ENCODE measurements at regions of chr7 and their contacts with region 1.

Region 1: DNA sequence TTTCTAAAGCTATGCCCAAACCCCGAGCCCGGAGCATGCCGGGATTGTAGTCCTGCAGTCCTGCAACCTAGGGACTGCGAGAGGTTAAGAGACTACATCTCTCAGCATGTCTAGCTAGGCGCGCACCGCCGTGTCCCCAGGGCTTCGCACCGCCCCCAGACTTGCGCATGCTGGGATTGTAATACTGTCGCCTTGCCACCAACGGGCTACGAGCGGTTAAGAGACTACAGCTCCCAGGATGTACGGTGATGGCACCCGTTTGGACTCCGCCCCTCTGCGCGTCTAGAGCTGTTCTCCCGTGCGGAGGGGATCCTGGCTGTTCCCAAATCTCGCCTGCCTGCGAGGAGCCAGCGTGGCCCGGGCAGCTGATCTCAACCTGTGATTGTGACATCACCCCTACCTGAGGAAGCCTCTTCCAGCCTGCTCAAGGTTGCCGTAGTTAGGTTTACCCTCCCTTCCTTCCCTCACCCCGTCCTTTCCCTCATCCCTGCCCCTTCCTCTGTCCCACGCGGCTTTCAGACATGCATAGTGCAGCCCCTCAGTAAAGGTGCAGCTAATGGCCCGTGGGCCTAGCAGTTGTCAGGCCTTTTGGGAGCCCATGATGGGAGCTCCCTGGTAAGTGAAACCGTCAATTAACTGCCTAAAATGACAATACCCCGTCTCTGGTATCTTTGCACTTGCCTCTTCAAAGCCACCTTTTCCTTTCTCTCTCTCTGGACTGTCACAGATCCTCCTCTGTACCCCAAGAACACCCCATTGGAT is 6.3 kb upstream of the ZNF736 start:
- DNase-seq: peak; percentile 96
- H3K4me3 ChIP-seq: peak overlapping the region; percentile 51 to 59 (median 58)
- H3K27ac ChIP-seq: peak overlapping the region; percentile 85 to 88 (median 86)
- H3K4me1 ChIP-seq: peaks cover 0 to 15% (median 9%) of the 10 kb centered on the region in 4 donors
- H3K27me3 ChIP-seq: no peaks in the 10 kb centered on the region
- CTCF ChIP-seq: peak in 2 of 4 experiments; percentile 13 to 22
- EP300 ChIP-seq: no peak
- POLR2A ChIP-seq: peak in 1 of 2 donors; percentile 15

Region 2: GRCh38 chr7:64192148-64192704 is 115.2 kb before region 1 on chr7:
- intact Hi-C with region 1: no loop called
- DNase-seq: no peak
- H3K4me3 ChIP-seq: no peak overlapping the region
- H3K27ac ChIP-seq: no peak overlapping the region
- H3K4me1 ChIP-seq: no peaks in the 10 kb centered on the region
- H3K27me3 ChIP-seq: no peaks in the 10 kb centered on the region
- CTCF ChIP-seq: no peak
- EP300 ChIP-seq: no peak
- POLR2A ChIP-seq: no peak

Region 3: DNA sequence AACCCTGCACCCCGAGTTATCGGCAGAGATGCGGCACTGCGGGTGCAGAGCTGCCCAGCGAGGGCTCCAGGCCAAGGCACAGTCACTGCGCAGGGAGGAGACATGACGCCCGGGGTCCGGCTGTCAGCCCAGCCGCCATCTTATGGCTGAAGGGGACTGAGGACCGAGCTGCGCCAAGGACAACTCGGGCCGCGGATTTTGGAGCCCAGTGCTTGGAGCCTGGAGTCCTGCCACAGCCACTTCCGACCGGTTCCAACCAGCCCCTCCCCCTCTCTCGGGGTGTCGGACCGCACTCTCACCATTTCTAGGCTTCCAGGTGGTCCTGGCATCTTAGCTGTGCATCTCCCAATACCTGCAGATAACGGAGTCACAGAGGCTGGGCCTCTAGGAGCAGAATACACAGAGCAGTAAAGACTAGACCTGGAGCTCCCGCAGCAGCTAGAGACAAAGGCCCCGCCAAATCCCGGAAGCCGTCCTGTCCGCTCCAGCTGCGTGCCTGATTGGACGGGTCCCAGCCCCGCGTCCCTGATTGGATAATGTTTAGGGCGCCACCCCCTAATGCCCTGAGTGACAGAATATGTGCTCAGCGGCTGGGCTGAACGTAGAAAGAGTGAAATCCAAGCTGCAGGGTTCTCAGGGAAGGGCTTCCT is 255.3 kb after region 1 on chr7 and contains the start of gene ZNF680:
- intact Hi-C with region 1: loop called (anchors 5 kb)
- DNase-seq: peak; percentile 98
- H3K4me3 ChIP-seq: peak within 1 kb of the TSS; percentile 71 to 76 (median 72)
- H3K27ac ChIP-seq: peak within 1 kb of the TSS; percentile 74 to 92 (median 86)
- H3K4me1 ChIP-seq: peaks cover 0 to 36% (median 29%) of the 10 kb centered on the region in 4 donors
- H3K27me3 ChIP-seq: no peaks in the 10 kb centered on the region
- CTCF ChIP-seq: no peak
- EP300 ChIP-seq: peak in 1 of 4 donors; percentile 24
- POLR2A ChIP-seq: peak; percentile 41 to 59
- total RNA-seq, gene ZNF680: 9.8 to 28.0 (median 16.7) TPM

Region 4: GRCh38 chr7:64744680-64745079 is 437.2 kb after region 1 on chr7:
- intact Hi-C with region 1: no loop called
- DNase-seq: no peak
- H3K4me3 ChIP-seq: no peak overlapping the region
- H3K27ac ChIP-seq: no peak overlapping the region
- H3K4me1 ChIP-seq: no peaks in the 10 kb centered on the region
- H3K27me3 ChIP-seq: no peaks in the 10 kb centered on the region
- CTCF ChIP-seq: no peak
- EP300 ChIP-seq: no peak
- POLR2A ChIP-seq: no peak